ENCODE measurements at regions of chr12 and their contacts with region 1.

Region 1: DNA sequence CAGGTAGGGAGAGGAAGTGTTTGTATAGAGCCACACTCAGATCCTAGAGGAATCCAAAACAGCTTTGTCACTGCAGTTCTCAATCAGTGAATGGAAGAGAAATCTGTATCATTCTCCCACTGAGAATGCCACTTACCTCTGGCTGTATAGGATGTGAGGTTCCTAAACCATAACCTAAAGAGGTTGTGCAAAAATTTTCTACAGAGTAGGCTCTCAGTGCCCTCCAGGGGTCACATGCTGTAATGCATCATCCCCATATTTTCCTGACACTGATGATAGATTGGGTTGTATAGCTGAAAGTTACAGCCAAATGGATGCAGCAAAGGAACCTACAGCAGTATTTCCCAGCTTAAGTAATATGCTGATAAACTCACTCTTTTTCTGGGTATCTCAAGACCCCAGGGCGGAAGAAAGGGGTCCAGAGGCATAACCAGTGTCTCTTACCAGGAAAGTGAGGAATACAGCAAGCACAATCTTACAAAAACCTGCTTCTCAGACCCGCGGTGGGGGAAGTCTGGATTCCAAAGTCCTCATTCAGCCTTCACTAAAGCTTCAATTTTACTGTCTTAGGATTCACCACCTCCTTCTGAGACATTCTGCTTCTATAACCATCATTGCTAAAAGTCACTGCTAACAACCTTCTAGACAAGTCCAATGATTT is 3.8 kb downstream of the BCDIN3D start:
- DNase-seq: peak; percentile 40
- H3K4me3 ChIP-seq: no peak overlapping the region
- H3K27ac ChIP-seq: no peak overlapping the region
- H3K4me1 ChIP-seq: peaks cover 17% of the 10 kb centered on the region
- H3K27me3 ChIP-seq: no peaks in the 10 kb centered on the region
- CTCF ChIP-seq: peak; percentile 76 to 96

Region 2: GRCh38 chr12:49636979-49637755 is 201.9 kb before region 1 on chr12:
- CTCF ChIA-PET with region 1: no interaction called
- dilution Hi-C with region 1: no loop called
- in situ Hi-C with region 1: no loop called
- intact Hi-C with region 1: loop called (anchors 2 kb)
- DNase-seq: peak; percentile 46
- H3K4me3 ChIP-seq: no peak overlapping the region
- H3K27ac ChIP-seq: no peak overlapping the region
- H3K4me1 ChIP-seq: no peaks in the 10 kb centered on the region
- H3K27me3 ChIP-seq: no peaks in the 10 kb centered on the region
- CTCF ChIP-seq: peak; percentile 79 to 90

Region 3: DNA sequence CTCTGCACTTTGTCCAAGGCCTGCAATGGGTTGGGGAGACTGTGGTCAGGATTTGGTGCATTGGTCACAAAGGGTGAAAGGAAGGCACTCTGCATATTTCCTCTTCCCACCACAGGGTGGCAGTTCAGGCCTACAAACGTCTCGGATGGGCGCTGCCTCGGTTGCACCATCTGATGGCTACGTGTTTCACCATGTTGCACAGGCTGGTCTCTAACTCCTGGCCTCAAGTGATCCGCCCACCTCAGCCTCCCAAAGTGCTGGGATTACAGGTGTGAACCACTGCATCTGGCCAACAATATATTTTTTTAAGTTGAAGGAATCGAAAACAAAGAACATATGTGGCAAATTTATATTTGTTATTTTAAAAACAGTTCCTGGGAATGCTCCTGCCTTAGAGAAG is 62.7 kb before region 1 on chr12:
- CTCF ChIA-PET with region 1: interaction called, 4 read pairs
- dilution Hi-C with region 1: loop called (anchors 5 kb)
- in situ Hi-C with region 1: loop called (anchors 5 kb)
- intact Hi-C with region 1: loop called (anchors 1 kb)
- DNase-seq: peak; percentile 64
- H3K4me3 ChIP-seq: no peak overlapping the region
- H3K27ac ChIP-seq: no peak overlapping the region
- H3K4me1 ChIP-seq: peaks cover 15% of the 10 kb centered on the region
- H3K27me3 ChIP-seq: no peaks in the 10 kb centered on the region
- CTCF ChIP-seq: peak; percentile 84 to 85

Region 4: GRCh38 chr12:49783917-49784676 is 55.0 kb before region 1 on chr12:
- CTCF ChIA-PET with region 1: no interaction called
- dilution Hi-C with region 1: loop called (anchors 5 kb)
- in situ Hi-C with region 1: loop called (anchors 5 kb)
- intact Hi-C with region 1: no loop called
- DNase-seq: no peak
- H3K4me3 ChIP-seq: no peak overlapping the region
- H3K27ac ChIP-seq: no peak overlapping the region
- H3K4me1 ChIP-seq: no peaks in the 10 kb centered on the region
- H3K27me3 ChIP-seq: no peaks in the 10 kb centered on the region
- CTCF ChIP-seq: no peak

Measured in mammary epithelial cell (primary cell).